ENCODE measurements at regions of chr12 and their contacts with region 1.

Region 1: DNA sequence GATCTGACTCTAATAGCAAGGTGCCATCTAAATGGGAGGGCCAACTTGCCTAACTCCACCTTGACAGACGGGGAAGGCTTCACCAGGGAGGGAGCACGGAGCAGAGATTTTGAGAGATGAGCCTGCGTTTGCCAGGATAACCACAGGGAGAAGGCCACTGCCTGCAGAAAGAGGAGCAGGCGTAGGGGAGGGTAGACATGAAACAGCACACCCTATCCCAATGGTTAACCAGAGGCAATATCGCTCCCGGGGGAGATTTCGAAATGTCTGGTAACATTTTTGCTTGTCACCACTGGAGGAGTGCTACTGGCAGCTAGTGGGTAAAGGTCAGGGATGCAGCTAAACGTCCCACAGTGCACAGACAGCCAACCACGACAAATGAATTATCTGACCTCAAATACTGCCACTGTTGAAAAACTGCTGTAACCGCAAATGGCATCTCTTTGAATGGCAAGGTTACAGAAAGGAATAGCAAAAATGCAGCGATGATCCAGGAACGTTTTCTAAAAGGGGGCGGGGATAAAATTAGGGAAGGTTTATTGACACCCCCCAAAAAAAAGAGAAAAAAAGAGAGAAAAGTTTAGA is 126.0 kb upstream of the ATF7IP start:
- DNase-seq: peak; percentile 74
- H3K4me3 Mint-ChIP-seq: peak overlapping the region; percentile 82
- H3K27ac Mint-ChIP-seq: peak overlapping the region; percentile 82
- H3K4me1 Mint-ChIP-seq: peaks cover 20% of the 10 kb centered on the region
- H3K27me3 Mint-ChIP-seq: no peaks in the 10 kb centered on the region

Region 2: DNA sequence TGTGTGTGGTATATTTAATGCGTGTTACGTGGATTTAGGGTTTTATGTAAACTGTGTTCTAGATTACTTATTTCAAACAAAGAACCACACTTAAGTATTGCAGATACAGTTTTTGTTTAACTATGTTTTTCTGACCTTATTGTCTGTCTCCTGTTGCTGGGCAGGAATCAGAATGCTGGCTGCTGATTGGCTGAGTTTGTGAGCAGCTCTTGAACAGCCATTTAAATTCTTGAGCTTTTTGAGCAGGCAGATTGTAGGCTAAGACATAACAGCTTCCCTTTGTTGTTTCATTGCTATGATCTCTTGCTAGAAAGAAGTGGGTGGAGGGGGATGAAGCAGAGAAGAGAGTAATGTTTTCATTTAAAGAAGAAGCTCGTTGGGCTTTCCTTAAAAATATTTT is 178.3 kb after region 1 on chr12:
- intact Hi-C with region 1: loop called (anchors 1 kb)
- DNase-seq: peak; percentile 90
- H3K4me3 Mint-ChIP-seq: peak overlapping the region; percentile 62
- H3K27ac Mint-ChIP-seq: peak overlapping the region; percentile 85
- H3K4me1 Mint-ChIP-seq: peaks cover 37% of the 10 kb centered on the region
- H3K27me3 Mint-ChIP-seq: no peaks in the 10 kb centered on the region

Region 3: GRCh38 chr12:14454098-14454907 is 214.9 kb after region 1 on chr12:
- intact Hi-C with region 1: loop called (anchors 1 kb)
- DNase-seq: peak; percentile 80
- H3K4me3 Mint-ChIP-seq: peak overlapping the region; percentile 39
- H3K27ac Mint-ChIP-seq: peak overlapping the region; percentile 69
- H3K4me1 Mint-ChIP-seq: peaks cover 47% of the 10 kb centered on the region
- H3K27me3 Mint-ChIP-seq: no peaks in the 10 kb centered on the region

Region 4: DNA sequence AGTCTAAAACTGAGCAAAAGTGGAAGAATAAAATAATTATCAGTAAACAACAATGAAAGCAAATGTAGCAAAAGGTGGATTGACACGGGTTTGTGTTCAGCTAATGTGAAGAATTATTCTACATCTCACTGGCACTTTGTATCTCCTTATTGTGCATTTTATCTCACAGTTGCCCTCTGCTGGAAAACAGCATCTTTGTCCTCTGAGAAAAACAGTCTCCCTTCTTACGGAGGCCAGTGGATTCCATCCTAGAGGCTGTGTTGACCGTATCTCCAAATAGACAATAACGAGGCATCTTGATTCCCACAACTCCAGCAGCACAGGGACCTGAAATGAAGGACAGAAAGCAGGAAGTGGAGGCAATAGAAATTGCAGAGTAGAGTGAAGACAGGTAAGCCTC is 379.5 kb after region 1 on chr12:
- intact Hi-C with region 1: loop called (anchors 5 kb)
- DNase-seq: peak; percentile 66
- H3K4me3 Mint-ChIP-seq: no peak overlapping the region
- H3K27ac Mint-ChIP-seq: no peak overlapping the region
- H3K4me1 Mint-ChIP-seq: peaks cover 3% of the 10 kb centered on the region
- H3K27me3 Mint-ChIP-seq: peaks cover 8% of the 10 kb centered on the region

Region 5: GRCh38 chr12:14629832-14630710 is 390.6 kb after region 1 on chr12:
- intact Hi-C with region 1: loop called (anchors 1 kb)
- DNase-seq: peak; percentile 90
- H3K4me3 Mint-ChIP-seq: no peak overlapping the region
- H3K27ac Mint-ChIP-seq: no peak overlapping the region
- H3K4me1 Mint-ChIP-seq: no peaks in the 10 kb centered on the region
- H3K27me3 Mint-ChIP-seq: peaks cover 23% of the 10 kb centered on the region

Region 6: DNA sequence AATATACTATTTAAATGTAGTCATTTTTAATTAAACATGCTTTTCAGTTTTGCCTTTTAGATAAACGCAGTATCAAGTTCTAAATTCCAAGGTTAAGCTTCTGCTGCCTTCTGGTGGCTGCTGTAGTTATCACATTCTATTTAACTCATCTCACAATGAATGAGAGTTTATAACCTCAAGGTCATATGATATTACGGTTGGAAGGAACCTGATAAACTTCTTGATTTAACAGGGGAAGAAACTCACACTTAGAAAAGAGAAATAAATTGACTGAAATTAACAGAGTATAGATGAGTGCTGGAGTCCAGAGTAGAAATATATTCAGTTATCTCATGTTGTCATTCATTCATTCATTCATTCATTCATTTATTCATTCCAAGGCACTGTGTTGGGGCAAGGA is 425.1 kb after region 1 on chr12:
- intact Hi-C with region 1: loop called (anchors 1 kb)
- DNase-seq: peak; percentile 81
- H3K4me3 Mint-ChIP-seq: no peak overlapping the region
- H3K27ac Mint-ChIP-seq: no peak overlapping the region
- H3K4me1 Mint-ChIP-seq: peaks cover 6% of the 10 kb centered on the region
- H3K27me3 Mint-ChIP-seq: peaks cover 12% of the 10 kb centered on the region

Region 7: GRCh38 chr12:14716848-14717444 is 477.5 kb after region 1 on chr12:
- intact Hi-C with region 1: loop called (anchors 1 kb)
- DNase-seq: peak; percentile 86
- H3K4me3 Mint-ChIP-seq: no peak overlapping the region
- H3K27ac Mint-ChIP-seq: no peak overlapping the region
- H3K4me1 Mint-ChIP-seq: peaks cover 3% of the 10 kb centered on the region
- H3K27me3 Mint-ChIP-seq: peaks cover 22% of the 10 kb centered on the region

Measured in activated CD4-positive, alpha-beta T cell treated with anti-CD3 and anti-CD28 coated beads, Interleukin-2, amount 10 ng/mL, durations not matched to agents 24 days and 14 days (primary cell).